WTC11 (cell line): ENCODE measurements at regions of chr11 and their contacts with region 1.

Region 1: GRCh38 chr11:44298862-44299261 is 11.1 kb downstream of the ALX4 start:
- DNase-seq: no peak
- ATAC-seq: no peak
- H3K4me3 Mint-ChIP-seq: no peak overlapping the region
- H3K27ac Mint-ChIP-seq: no peak overlapping the region
- H3K4me1 Mint-ChIP-seq: peaks cover 6% of the 10 kb centered on the region
- H3K27me3 Mint-ChIP-seq: peaks cover 55% of the 10 kb centered on the region
- CTCF ChIP-seq: no peak

Region 2: GRCh38 chr11:44286268-44286880 is 12.5 kb before region 1 on chr11:
- CTCF ChIA-PET with region 1: interaction called, 11 read pairs
- POLR2A ChIA-PET with region 1: no interaction called
- DNase-seq: peak; percentile 83
- ATAC-seq: peak; percentile 89
- H3K4me3 Mint-ChIP-seq: no peak overlapping the region
- H3K27ac Mint-ChIP-seq: no peak overlapping the region
- H3K4me1 Mint-ChIP-seq: peaks cover 5% of the 10 kb centered on the region; the same call in 1 of the 2 replicates
- H3K27me3 Mint-ChIP-seq: no peaks in the 10 kb centered on the region
- CTCF ChIP-seq: peak; percentile 92